Activated CD8-positive, alpha-beta memory T cell treated with anti-CD3 and anti-CD28 coated beads, Interleukin-2, amount 10 ng/mL, durations not matched to agents 7 days and 5 days (primary cell): ENCODE measurements at regions of chr20 and their contacts with region 1.

Region 1: GRCh38 chr20:57596998-57597939 is 23.0 kb downstream of the ZBP1 start:
- DNase-seq: peak; percentile 77
- ATAC-seq: peak; percentile 86
- H3K4me3 Mint-ChIP-seq: no peak overlapping the region
- H3K27ac Mint-ChIP-seq: no peak overlapping the region
- H3K4me1 Mint-ChIP-seq: peaks cover 26% of the 10 kb centered on the region
- H3K27me3 Mint-ChIP-seq: peaks cover 33% of the 10 kb centered on the region

Region 2: GRCh38 chr20:57450419-57450818 is 146.8 kb before region 1 on chr20:
- CTCF ChIA-PET with region 1: no interaction called
- DNase-seq: peak; percentile 55
- ATAC-seq: peak; percentile 32
- H3K4me3 Mint-ChIP-seq: no peak overlapping the region
- H3K27ac Mint-ChIP-seq: no peak overlapping the region
- H3K4me1 Mint-ChIP-seq: peaks cover 26% of the 10 kb centered on the region
- H3K27me3 Mint-ChIP-seq: peaks cover 21% of the 10 kb centered on the region

Region 3: GRCh38 chr20:57464715-57465211 is 132.5 kb before region 1 on chr20:
- CTCF ChIA-PET with region 1: no interaction called
- DNase-seq: no peak
- ATAC-seq: no peak
- H3K4me3 Mint-ChIP-seq: no peak overlapping the region
- H3K27ac Mint-ChIP-seq: no peak overlapping the region
- H3K4me1 Mint-ChIP-seq: no peaks in the 10 kb centered on the region
- H3K27me3 Mint-ChIP-seq: peaks cover 4% of the 10 kb centered on the region

Region 4: DNA sequence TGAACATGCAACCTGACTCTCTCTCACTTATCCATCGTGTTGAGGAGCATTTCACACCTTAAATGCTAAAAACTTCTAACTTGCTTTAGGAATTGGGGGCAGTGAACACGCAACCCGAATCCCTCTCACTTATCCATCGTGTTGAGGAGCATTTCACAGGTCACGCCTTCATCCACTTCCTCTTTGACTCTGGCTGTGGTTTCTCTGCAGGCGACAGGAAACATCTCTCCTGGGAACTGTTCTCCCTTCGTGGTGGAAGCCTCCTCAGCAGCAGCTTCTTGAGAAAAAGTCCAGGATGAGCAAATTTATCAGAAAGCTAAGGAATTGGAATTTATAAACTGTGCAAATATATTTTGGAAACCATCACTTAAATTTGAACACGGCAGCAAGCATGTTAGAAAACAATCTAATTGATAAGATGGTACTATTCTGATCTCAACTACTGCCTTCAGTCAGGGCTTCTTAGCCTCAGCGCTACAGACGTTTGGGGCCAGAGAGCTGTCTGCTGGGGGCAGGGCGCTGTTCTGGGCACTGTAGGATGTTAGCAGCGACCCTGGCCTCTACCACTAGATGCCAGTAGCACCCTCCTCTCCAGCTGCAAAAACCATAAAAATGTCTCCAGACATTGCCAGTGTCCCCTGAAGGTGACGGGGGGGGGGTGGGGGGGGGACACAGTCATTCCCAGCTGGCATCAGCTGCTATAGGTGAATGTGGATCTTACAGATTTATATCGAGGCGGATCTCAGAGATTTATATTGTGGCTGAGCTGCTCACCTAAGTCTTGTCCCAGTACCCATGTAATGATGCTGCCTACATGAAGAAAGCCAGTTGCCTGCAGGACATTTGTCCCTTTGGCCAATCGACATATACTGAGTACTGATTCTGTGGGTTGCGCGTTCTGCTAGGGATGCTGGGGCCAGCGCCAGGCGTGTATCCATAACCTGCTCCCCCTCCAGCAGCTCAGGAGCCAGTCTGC is 98.6 kb before region 1 on chr20:
- CTCF ChIA-PET with region 1: interaction called, 17 read pairs
- DNase-seq: peak; percentile 50
- ATAC-seq: peak; percentile 85
- H3K4me3 Mint-ChIP-seq: no peak overlapping the region
- H3K27ac Mint-ChIP-seq: no peak overlapping the region
- H3K4me1 Mint-ChIP-seq: peaks cover 15% of the 10 kb centered on the region
- H3K27me3 Mint-ChIP-seq: peaks cover 75% of the 10 kb centered on the region

Region 5: DNA sequence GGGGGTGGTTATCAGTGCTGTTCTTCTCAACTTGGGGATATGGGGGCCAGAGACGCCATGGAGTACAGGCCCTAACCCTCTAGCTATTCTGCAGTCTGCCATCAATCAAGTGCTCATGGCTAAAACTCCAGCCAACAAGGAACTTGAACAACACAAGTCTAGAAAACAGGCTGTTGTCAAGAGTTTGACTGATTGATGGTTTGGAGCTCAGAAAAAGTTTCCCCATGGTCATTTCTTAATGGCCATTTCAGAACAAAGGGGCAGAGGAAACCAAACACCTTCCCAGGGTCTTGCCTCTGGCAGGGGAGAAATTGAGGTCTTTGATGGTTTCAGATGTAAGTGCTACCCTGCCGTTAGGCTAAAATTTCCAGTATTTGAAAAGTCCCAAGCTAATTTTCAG is 21.3 kb before region 1 on chr20:
- CTCF ChIA-PET with region 1: no interaction called
- DNase-seq: no peak
- ATAC-seq: no peak
- H3K4me3 Mint-ChIP-seq: no peak overlapping the region
- H3K27ac Mint-ChIP-seq: no peak overlapping the region
- H3K4me1 Mint-ChIP-seq: no peaks in the 10 kb centered on the region
- H3K27me3 Mint-ChIP-seq: peaks cover 33% of the 10 kb centered on the region

Region 6: GRCh38 chr20:57654363-57654997 is 57.2 kb after region 1 on chr20:
- CTCF ChIA-PET with region 1: interaction called, 43 read pairs
- DNase-seq: peak; percentile 70
- ATAC-seq: peak; percentile 81
- H3K4me3 Mint-ChIP-seq: no peak overlapping the region
- H3K27ac Mint-ChIP-seq: no peak overlapping the region
- H3K4me1 Mint-ChIP-seq: peaks cover 13% of the 10 kb centered on the region
- H3K27me3 Mint-ChIP-seq: peaks cover 2% of the 10 kb centered on the region

Region 7: DNA sequence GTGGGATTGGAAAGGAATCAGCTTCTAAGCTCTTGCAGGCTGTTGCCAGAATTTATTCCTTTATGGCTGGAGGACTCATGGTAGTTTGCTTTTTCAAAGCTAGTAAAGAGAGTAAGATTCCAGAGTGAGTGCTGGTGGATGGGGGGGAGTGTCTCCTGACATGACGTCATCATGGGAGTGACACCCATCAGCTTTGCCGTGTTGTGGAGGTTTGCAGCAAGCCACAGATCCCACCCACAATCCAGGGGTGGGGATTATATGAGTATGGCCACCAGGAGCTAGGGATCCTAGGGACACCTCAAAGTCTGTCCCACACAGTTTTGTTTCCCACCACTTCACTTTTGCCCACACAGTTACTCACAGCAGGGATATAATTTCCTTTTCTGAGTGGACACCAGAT is 141.2 kb after region 1 on chr20:
- CTCF ChIA-PET with region 1: no interaction called
- DNase-seq: no peak
- ATAC-seq: no peak
- H3K4me3 Mint-ChIP-seq: no peak overlapping the region
- H3K27ac Mint-ChIP-seq: no peak overlapping the region
- H3K4me1 Mint-ChIP-seq: no peaks in the 10 kb centered on the region
- H3K27me3 Mint-ChIP-seq: peaks cover 9% of the 10 kb centered on the region

Region 8: GRCh38 chr20:58087193-58087858 is 490.1 kb after region 1 on chr20:
- CTCF ChIA-PET with region 1: interaction called, 15 read pairs
- DNase-seq: no peak
- ATAC-seq: no peak
- H3K4me3 Mint-ChIP-seq: no peak overlapping the region
- H3K27ac Mint-ChIP-seq: no peak overlapping the region
- H3K4me1 Mint-ChIP-seq: no peaks in the 10 kb centered on the region
- H3K27me3 Mint-ChIP-seq: no peaks in the 10 kb centered on the region

Region 9: GRCh38 chr20:58179432-58180099 is 582.3 kb after region 1 on chr20:
- CTCF ChIA-PET with region 1: interaction called, 18 read pairs
- DNase-seq: peak; percentile 62
- ATAC-seq: peak; percentile 89
- H3K4me3 Mint-ChIP-seq: peak overlapping the region; percentile 40
- H3K27ac Mint-ChIP-seq: no peak overlapping the region
- H3K4me1 Mint-ChIP-seq: peaks cover 3% of the 10 kb centered on the region
- H3K27me3 Mint-ChIP-seq: peaks cover 26% of the 10 kb centered on the region

Region 10: DNA sequence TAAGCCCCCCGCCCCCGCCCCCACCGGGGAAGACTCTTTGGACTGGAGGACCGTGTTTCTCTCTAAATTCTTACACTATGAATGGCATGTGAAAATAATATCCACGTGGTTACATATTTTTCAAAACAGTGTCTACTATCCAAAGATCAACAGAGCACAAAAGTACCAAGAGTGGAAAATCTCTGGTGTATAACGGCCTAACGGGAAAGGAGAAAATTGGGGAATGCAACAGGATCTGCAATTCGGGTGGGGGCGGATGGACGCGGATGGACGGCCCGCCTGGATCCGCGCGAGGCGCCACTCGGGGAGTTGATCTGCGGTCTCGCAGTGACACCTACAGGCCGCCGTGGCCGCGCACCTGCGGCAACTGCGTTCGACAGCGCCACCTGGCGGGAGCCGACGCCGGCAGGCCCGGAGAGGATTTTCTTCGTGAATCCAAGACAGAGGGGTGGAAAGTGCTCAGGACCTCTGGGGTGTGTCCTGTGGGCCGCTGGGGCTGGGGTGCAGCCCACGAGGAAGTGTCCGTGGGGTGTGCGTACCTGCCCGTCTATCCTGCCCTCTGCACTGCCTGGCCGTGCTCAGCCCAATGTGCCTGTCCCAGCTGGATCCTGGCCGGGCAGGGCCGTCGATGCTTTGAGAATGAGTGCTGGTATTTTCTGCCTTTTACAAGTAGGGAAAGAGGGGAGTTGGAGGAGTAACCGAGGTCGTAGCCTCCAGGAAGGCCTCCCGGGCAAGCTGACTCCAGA is 612.6 kb after region 1 on chr20:
- CTCF ChIA-PET with region 1: interaction called, 19 read pairs
- DNase-seq: peak; percentile 85
- ATAC-seq: peak; percentile 96
- H3K4me3 Mint-ChIP-seq: no peak overlapping the region
- H3K27ac Mint-ChIP-seq: no peak overlapping the region
- H3K4me1 Mint-ChIP-seq: peaks cover 2% of the 10 kb centered on the region
- H3K27me3 Mint-ChIP-seq: peaks cover 31% of the 10 kb centered on the region